ENCODE measurements at regions of chr1 and their contacts with region 1.

Region 1: DNA sequence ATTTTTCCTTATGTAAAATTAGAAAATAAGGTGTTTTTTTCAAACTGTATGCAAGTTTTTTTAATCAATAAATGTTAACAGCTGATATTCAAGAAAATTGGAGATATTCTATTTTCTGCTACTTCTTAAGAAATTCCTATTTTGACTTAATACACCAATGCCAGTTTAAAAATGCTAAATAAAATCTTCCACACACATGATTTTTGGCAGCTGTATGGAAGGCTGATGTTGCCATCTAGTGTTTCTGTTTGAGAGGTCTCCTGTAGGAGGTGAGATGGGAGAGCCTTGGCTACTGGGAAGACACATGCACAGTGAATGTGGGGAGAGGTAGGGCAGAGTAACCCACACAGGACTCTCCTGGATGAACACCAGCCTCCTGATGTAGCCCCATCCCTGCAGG is 29.2 kb upstream of the OR2B11 start:
- DNase-seq: peak; percentile 10
- H3K4me3 Mint-ChIP-seq: no peak overlapping the region
- H3K27ac Mint-ChIP-seq: no peak overlapping the region
- H3K4me1 Mint-ChIP-seq: no peaks in the 10 kb centered on the region
- H3K27me3 Mint-ChIP-seq: peaks cover 13% of the 10 kb centered on the region
- CTCF ChIP-seq: no peak

Region 2: DNA sequence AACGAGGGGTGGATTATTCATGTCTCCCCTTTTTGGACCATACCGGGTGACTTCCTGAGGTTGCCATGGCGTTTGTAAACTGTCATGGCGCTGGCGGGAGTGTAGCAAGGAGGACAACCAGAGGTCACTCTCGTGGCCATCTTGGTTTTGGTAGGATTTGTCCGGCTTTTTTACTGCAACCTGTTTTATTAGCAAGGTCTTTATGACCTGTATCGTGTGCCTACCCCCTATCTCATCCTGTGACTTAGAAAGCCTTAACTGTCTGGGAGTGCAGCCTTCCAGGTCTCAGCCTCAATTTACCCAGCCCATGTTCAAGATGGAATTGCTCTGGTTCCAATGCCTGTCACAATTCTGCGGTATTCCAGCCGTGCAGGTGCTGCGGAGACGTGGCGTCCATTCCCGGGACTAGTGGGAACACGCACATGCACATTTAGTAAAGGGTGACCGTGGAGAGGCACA is 115.2 kb before region 1 on chr1:
- CTCF ChIA-PET with region 1: no interaction called
- intact Hi-C with region 1: loop called (anchors 1 kb)
- DNase-seq: no peak
- H3K4me3 Mint-ChIP-seq: no peak overlapping the region
- H3K27ac Mint-ChIP-seq: no peak overlapping the region
- H3K4me1 Mint-ChIP-seq: no peaks in the 10 kb centered on the region
- H3K27me3 Mint-ChIP-seq: no peaks in the 10 kb centered on the region
- CTCF ChIP-seq: no peak

Region 3: DNA sequence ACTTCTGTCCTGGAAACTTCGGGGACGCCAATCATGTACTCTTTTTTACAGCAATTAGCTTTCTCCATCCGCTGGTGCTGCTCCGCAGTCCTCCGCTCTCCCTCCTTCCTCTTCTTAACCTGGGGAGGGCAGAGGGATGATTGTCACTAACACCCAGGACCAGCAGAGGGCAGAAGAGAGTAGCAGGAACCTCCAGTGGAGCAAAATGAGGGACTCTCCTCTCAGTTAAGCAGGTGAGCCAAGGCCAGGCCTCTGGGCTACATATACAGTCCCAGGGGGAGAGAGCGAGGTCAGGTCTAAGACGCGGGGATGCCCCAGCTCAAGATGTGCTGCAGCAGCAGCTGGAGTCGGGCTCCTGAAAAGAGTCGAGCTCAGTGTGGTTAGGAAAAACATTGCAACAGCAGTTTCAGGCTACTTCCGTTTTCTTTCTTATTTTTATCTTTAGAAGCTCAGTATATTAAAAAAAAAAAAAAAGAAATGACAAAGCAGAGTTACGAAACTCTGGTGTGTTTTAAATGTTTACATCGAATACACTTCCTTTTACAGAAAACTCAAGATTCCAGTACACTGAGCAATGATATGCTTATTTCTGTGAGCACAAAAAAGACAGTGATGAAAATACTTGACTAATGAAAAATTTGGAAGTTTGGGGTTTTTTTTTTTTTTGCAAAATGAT is 96.8 kb before region 1 on chr1:
- CTCF ChIA-PET with region 1: interaction called, 10 read pairs
- intact Hi-C with region 1: loop called (anchors 1 kb)
- DNase-seq: peak; percentile 84
- H3K4me3 Mint-ChIP-seq: peak overlapping the region; percentile 18
- H3K27ac Mint-ChIP-seq: no peak overlapping the region
- H3K4me1 Mint-ChIP-seq: no peaks in the 10 kb centered on the region
- H3K27me3 Mint-ChIP-seq: no peaks in the 10 kb centered on the region
- CTCF ChIP-seq: peak; percentile 66

Region 4: DNA sequence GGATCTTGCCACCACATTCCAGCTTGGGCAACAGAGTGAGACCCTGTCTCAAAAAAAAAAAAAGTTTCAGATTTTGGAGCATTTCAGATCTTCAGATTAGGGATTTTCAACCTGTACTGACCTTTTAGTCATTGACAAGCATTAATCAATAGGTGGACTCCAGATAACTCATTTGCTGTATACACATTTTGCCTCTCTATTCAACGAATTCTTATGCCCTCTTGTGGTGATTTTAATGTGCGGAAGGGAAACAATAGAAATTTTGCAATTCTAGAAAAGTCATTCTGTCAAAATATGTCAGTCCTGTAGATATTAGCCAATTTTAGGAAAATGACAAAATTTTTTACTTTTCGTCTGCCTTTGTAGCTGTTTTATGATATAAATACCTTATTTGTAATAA is 89.4 kb after region 1 on chr1:
- CTCF ChIA-PET with region 1: no interaction called
- intact Hi-C with region 1: no loop called
- DNase-seq: no peak
- H3K4me3 Mint-ChIP-seq: no peak overlapping the region
- H3K27ac Mint-ChIP-seq: no peak overlapping the region
- H3K4me1 Mint-ChIP-seq: no peaks in the 10 kb centered on the region
- H3K27me3 Mint-ChIP-seq: no peaks in the 10 kb centered on the region
- CTCF ChIP-seq: no peak

Region 5: DNA sequence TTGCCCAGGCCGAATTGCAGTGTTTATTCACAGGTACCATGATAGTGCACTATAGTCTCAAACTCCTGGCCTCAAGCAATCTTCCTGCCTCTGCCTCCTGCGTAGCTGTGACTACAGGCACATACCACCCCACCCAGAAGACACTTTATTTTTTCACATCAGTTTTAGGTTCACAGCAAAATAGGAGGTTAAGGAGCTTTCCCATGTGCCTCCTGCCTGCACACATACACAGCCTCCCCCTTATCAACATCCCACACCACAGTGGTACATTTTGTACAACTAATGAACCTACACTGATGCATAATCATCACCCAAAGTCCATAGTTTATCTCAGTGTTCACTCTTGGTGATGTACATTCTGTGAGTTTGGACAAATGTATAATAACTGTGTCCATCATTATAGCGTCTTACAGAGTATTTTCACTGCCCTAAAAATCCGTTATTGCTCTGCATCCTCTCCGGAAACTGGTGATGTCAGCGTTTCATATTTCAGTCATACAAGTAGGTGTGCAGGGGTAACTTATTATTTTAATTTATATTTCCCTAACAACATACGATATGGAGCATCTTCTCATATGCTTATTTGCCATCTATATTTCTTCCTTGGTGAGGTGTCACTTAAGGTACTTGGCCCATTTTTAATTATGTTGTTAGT is 169.3 kb after region 1 on chr1:
- CTCF ChIA-PET with region 1: no interaction called
- intact Hi-C with region 1: no loop called
- DNase-seq: no peak
- H3K4me3 Mint-ChIP-seq: no peak overlapping the region
- H3K27ac Mint-ChIP-seq: no peak overlapping the region
- H3K4me1 Mint-ChIP-seq: no peaks in the 10 kb centered on the region
- H3K27me3 Mint-ChIP-seq: no peaks in the 10 kb centered on the region
- CTCF ChIP-seq: no peak

Measured in Calu3 (cell line).